ENCODE measurements at regions of chr11 and their contacts with region 1.

Region 1: DNA sequence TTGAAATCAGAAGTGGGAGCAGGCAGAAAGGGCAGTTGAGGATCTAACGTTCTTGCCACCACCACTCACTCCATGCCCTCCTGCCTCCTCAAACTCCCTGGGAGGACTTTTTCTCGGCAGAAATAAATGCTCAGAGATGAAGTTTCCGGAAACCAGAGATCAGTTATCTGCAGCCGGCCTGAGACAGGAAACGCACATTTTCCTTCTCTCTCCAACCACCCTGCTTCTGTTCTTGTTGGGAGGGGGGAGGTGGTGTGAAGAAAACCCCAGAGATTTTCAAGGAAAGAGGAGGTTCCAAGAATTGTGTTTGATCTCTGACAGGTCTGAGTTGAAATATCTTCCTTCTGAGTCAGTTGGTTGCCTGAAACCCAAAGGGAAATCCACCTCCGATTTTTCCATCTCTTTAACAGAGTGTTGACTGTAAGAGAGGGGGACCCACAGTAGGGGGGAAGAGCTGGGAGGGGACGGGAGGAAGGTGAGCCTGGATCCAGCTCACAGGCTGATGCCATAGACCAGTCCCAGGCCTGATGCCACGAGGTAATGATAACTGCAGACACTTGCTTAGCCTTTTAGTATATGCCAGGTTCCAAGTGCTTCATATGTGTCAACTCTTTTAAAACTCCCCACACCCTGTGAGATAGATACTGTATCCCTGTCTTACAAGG is 100.8 kb downstream of the TRAF6 start:
- DNase-seq: peak; percentile 82
- H3K4me3 Mint-ChIP-seq: peak overlapping the region; percentile 75
- H3K27ac Mint-ChIP-seq: peak overlapping the region; percentile 96
- H3K4me1 Mint-ChIP-seq: peaks cover 67% of the 10 kb centered on the region
- H3K27me3 Mint-ChIP-seq: no peaks in the 10 kb centered on the region

Region 2: DNA sequence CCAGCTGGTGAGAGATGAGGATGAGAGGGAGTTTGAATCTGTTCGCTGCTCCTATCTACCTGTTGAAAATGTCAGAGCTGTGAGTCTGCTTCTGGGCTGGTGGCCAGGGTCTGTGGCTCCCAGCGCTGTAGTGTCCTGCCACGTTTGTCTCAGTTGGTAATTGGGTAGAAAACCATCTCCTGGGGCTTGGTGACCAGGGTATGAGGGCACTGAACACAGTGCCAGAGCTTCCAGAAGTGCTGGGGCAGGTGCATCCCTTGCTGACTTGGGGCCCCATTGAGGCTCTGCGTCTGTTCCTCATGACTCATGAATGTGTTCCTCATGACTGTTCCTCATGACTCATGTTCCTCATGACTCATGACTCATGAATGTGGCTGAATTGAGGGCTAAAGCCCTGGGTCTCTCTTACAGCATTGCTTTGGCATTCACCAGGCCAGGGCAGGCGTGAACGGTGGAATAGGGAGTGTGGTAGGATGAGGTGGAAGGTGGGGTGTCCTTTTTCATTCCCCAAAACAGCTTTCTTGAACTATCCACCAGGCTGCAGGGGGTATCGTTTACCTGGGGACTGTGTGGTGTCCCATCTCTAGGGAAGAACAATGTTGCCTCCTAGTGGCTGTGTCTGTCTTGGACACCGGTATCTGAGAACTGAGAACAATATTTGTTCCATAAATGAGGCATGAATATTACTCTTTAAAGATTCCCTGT is 259.6 kb before region 1 on chr11:
- intact Hi-C with region 1: no loop called
- DNase-seq: peak; percentile 72
- H3K4me3 Mint-ChIP-seq: peak overlapping the region; percentile 21
- H3K27ac Mint-ChIP-seq: peak overlapping the region; percentile 66
- H3K4me1 Mint-ChIP-seq: peaks cover 10% of the 10 kb centered on the region
- H3K27me3 Mint-ChIP-seq: peaks cover 9% of the 10 kb centered on the region

Region 3: DNA sequence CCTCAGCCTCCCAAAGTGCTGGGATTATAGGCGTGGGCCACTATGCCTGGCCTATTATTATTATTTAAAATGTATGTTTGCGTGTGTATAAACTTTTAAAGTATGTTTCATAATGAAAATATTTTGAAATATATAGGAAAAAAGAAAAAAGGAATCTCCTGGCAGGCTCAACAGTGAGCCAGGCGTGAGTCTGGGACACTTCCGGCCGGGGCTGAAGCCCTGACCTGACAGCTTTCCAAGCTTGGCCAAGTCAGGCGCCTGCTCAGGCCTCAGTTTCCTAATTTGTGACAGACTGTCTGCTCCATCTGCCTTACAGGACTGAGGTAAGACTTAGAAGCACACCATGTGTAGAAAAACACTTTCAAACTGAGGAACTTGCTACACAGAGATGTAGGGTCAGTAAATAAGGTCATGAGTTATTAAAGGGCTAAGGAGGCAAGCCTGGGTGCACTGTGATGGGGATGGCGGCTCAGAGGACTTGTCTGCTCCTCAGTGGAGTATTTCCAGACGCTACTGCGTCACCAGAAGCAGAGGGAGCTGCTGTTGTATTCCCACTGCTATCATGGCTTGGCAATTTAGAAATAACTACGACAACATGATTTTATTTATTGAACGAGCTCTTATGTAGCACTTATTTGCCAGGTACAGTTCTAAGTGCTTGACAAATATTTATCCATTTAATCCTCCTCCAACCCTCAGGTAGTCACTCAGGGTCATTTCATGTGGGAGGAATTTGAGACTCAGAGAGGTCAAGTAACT is 13.1 kb before region 1 on chr11:
- intact Hi-C with region 1: loop called (anchors 1 kb)
- DNase-seq: no peak
- H3K4me3 Mint-ChIP-seq: no peak overlapping the region
- H3K27ac Mint-ChIP-seq: no peak overlapping the region
- H3K4me1 Mint-ChIP-seq: peaks cover 63% of the 10 kb centered on the region
- H3K27me3 Mint-ChIP-seq: no peaks in the 10 kb centered on the region

Region 4: DNA sequence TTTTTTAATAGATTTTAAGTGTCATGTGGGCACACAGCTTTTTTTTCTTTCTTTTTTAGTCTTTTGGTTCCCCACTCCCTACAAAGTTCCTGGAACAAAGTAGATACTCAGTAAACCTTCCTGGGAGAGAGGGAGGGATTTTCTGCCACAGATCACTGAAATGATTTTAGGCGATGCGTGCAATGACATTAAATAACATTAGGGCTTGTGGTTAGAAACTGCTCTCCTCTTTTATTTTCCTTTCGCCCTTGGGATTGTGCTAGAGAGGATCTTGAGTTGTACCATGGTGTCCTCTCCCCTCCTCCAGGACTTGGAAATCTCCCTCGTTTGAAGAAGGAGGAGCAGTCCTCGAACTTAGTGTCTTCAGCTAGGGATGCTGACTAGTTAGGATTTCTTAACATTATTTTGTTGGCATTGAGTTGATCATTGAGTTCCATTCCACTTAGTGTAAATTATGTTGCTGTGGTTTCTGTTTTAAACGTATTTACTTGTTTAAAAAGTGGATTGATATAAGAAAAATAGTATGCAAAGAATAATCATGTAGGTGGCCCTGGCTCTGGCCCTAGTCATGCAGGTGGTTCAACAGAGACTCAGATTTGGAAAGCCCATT is 12.4 kb after region 1 on chr11:
- intact Hi-C with region 1: loop called (anchors 1 kb)
- DNase-seq: no peak
- H3K4me3 Mint-ChIP-seq: peak overlapping the region; percentile 75
- H3K27ac Mint-ChIP-seq: peak overlapping the region; percentile 91
- H3K4me1 Mint-ChIP-seq: peaks cover 63% of the 10 kb centered on the region
- H3K27me3 Mint-ChIP-seq: no peaks in the 10 kb centered on the region

Region 5: DNA sequence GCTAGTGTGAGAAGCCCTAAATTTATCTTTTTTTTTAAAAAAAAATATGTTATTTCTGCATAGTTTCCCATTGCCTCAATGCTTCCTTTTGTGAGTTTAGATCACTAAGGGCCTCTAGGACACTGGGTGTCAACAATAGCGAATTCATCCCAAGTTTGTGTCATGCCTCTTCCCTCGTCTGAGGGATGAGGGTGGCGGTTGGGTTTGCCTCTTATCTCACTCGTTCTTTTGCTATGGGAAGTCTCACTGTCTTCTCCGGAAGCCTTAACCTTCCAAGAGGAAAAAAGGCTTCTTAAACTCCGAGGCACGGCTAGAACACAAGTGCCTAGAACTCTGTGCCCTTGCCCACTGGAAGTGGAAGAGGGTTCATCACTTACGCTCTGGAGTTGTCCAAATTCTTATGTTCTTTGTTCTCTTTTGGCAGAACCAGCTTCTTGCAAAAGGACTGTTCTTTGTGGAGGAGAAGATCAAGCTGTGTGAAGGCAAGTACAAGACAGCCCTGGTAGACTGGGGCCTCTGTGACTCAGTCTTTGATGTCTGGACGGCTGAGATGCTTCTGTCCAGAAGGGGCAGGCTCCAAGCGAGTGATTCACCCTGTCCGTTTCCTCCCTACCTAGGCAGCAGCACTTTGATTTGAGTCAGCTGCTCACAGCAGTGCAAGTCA is 22.3 kb after region 1 on chr11:
- intact Hi-C with region 1: loop called (anchors 1 kb)
- DNase-seq: peak; percentile 70
- H3K4me3 Mint-ChIP-seq: peak overlapping the region; percentile 51
- H3K27ac Mint-ChIP-seq: peak overlapping the region; percentile 49
- H3K4me1 Mint-ChIP-seq: peaks cover 14% of the 10 kb centered on the region
- H3K27me3 Mint-ChIP-seq: no peaks in the 10 kb centered on the region

Region 6: DNA sequence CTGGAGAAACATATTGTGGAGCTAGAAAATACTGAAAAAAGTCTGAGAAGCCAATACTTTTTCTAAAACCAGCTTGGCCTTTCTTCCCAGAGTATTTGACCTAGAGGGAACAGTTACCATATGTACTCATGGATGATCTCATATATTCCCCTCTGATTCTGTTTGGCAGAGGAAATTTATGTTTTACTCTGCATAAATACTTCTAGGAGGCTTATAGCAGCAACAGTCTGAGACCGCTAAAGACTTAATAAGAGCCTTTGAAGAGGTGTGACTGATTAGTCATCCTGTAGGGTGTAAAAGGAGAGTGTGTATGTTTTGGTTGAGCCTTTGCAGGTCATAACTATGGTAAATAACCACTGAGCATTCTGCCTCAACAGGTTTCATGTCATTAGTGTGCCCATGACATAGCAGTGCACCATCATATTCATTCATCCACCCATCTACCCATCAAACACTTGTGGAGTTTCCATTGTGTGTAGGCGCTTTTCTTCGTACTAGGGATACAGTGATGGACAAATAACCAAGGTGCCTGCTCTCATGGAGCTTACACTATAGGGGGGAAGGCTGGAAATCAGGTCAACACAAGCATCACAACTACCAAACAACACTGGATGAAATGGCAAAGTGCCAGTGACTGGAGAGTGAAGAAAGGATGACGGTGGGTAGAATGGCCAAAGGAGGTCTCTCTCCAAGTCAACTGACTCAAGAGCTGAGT is 56.3 kb after region 1 on chr11:
- intact Hi-C with region 1: no loop called
- DNase-seq: no peak
- H3K4me3 Mint-ChIP-seq: no peak overlapping the region
- H3K27ac Mint-ChIP-seq: no peak overlapping the region
- H3K4me1 Mint-ChIP-seq: peaks cover 2% of the 10 kb centered on the region
- H3K27me3 Mint-ChIP-seq: no peaks in the 10 kb centered on the region